ENCODE measurements at regions of chr5 and their contacts with region 1.

Region 1: DNA sequence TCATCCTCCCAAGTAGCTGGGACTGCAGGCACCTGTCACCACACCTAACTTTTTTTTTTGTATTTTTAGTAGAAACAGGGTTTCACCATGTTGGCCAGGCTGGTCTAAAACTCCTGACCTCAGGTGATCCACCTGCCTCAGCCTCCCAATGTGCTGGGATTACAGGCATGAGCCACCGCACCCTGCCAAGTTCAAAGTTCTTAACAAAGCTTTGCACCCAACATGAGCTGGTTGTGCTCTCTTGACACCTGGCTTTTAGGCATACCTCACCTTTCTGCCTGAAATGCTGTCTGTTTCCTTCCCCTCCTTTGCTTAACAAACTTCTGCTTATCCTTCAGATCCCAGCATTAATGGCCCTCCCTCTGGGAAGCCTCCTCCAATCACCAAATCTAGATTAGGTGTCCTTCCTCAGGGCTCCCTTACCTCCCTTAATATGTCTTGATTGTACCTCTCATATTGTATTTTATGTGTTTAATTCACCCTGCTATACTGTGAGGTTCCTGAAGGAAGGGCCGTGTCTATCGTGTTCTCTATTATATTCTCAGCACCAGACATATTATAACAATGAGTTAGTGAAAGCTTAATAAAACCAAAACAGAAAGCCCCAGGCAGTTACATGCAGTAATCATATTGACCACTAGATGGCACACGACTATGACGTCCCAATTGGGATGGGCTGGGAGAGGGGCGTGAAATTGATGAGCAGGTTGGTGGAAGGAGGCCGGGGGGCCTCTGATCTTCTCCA is 62.9 kb upstream of the PPARGC1B start:
- DNase-seq: peak; percentile 66
- H3K4me3 Mint-ChIP-seq: no peak overlapping the region
- H3K27ac Mint-ChIP-seq: no peak overlapping the region
- H3K4me1 Mint-ChIP-seq: peaks cover 8% of the 10 kb centered on the region
- H3K27me3 Mint-ChIP-seq: no peaks in the 10 kb centered on the region
- CTCF ChIP-seq: peak; percentile 96

Region 2: GRCh38 chr5:149656576-149657182 is 10.6 kb before region 1 on chr5:
- CTCF ChIA-PET with region 1: interaction called, 22 read pairs
- POLR2A ChIA-PET with region 1: interaction called, 7 read pairs
- intact Hi-C with region 1: no loop called
- DNase-seq: peak; percentile 80
- H3K4me3 Mint-ChIP-seq: no peak overlapping the region
- H3K27ac Mint-ChIP-seq: no peak overlapping the region
- H3K4me1 Mint-ChIP-seq: no peaks in the 10 kb centered on the region
- H3K27me3 Mint-ChIP-seq: peaks cover 21% of the 10 kb centered on the region
- CTCF ChIP-seq: peak; percentile 85

Region 3: GRCh38 chr5:149724130-149724840 is 57.0 kb after region 1 on chr5:
- CTCF ChIA-PET with region 1: interaction called, 12 read pairs
- POLR2A ChIA-PET with region 1: interaction called, 4 read pairs
- intact Hi-C with region 1: no loop called
- DNase-seq: no peak
- H3K4me3 Mint-ChIP-seq: no peak overlapping the region
- H3K27ac Mint-ChIP-seq: no peak overlapping the region
- H3K4me1 Mint-ChIP-seq: peaks cover 10% of the 10 kb centered on the region
- H3K27me3 Mint-ChIP-seq: peaks cover 20% of the 10 kb centered on the region
- CTCF ChIP-seq: no peak

Region 4: DNA sequence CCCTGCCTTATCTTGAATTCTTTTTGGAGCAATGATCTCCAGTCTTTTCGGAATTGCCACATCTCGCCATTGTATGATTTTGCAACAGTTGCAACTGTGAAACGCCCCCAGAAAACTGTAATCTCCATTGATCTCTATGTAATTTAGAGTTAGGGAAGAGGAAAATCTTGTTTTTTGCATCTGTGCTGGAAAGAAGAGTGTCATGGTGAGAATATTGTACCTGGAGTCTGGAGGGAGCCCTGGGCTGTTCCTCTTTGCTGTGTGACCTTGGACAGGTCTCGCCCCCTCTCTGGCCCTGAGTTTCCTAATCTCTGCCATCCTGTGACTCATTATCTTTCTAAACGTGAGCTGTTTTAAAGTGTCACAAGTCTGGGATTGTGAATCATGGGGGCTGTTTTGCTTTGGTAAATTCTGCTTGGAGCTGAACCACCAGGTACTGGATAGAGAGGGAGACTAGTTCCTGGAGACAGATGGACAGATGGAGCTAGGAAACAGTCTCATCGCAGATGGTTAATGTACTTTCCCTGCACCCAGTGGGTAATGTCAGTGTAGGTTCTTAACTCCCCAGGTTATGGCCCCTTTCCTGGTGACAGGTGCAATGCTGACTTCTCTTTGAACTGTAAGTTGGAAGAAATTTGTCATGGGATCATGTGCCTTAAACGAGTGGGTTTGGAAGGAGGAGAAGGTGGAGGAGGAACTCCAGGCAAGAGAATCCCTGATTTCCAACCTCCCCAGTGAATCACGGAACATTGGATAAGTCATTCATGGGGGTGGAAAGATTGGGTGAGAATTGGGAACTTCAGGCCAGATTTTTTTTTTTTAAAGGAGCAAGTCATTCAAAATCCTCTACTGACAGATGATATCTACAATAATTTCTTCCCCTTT is 82.5 kb after region 1 on chr5:
- CTCF ChIA-PET with region 1: interaction called, 12 read pairs
- POLR2A ChIA-PET with region 1: no interaction called
- intact Hi-C with region 1: no loop called
- DNase-seq: peak; percentile 90
- H3K4me3 Mint-ChIP-seq: peak overlapping the region; percentile 45
- H3K27ac Mint-ChIP-seq: peak overlapping the region; percentile 63
- H3K4me1 Mint-ChIP-seq: peaks cover 64% of the 10 kb centered on the region
- H3K27me3 Mint-ChIP-seq: no peaks in the 10 kb centered on the region
- CTCF ChIP-seq: no peak

Region 5: DNA sequence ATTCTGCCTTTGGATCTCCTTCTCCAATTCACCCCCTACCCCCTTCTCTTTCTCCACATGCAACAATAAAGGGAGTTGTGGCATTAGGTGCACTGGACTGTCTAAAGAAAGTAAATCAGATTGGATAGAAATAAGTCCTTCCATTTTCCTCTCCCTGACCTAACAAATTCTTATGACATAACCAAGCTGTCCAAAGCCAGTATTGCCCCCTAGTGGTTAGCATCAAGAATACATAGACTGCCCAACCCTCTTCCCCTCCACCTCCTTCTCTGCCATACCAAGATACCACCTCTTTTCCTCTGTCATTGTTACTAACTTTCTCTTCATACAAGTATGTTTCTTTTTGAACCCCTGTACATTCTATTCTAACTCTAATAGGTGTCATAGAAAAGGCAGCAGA is 108.5 kb after region 1 on chr5:
- CTCF ChIA-PET with region 1: interaction called, 22 read pairs
- POLR2A ChIA-PET with region 1: no interaction called
- intact Hi-C with region 1: loop called (anchors 5 kb)
- DNase-seq: peak; percentile 63
- H3K4me3 Mint-ChIP-seq: no peak overlapping the region
- H3K27ac Mint-ChIP-seq: no peak overlapping the region
- H3K4me1 Mint-ChIP-seq: peaks cover 43% of the 10 kb centered on the region
- H3K27me3 Mint-ChIP-seq: no peaks in the 10 kb centered on the region
- CTCF ChIP-seq: peak; percentile 61

Region 6: DNA sequence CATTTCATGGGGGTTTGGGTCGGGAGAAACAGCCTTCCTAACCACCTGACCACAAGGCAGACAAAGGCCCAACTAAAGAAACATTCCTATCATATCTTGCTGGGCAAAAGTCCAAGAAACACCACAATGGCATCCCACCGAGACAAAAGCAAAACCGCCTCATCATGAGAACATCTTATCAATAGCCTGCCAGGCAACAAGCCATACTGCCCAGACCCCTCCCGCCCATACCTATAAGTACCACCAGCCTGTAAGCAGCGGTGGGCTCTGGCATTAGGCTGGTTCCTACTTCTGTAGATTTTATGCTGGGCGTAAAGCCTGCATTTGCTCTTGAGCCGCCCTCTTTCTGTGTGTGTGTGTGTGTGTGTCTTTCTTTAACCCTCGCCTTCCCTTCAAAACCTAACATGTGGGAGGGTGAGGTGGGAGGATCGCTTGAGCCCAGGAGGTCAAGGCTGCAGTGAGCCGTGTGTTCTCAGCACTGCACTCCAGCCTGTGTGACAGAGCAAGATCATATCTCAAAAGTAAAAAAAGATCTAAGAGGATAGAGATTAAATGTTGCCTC is 220.4 kb after region 1 on chr5:
- CTCF ChIA-PET with region 1: no interaction called
- POLR2A ChIA-PET with region 1: no interaction called
- intact Hi-C with region 1: no loop called
- DNase-seq: no peak
- H3K4me3 Mint-ChIP-seq: no peak overlapping the region
- H3K27ac Mint-ChIP-seq: peak overlapping the region; percentile 30
- H3K4me1 Mint-ChIP-seq: peaks cover 34% of the 10 kb centered on the region
- H3K27me3 Mint-ChIP-seq: no peaks in the 10 kb centered on the region
- CTCF ChIP-seq: no peak